OCI-LY7 (cell line): ENCODE measurements at regions of chr1 and their contacts with region 1.

Region 1: GRCh38 chr1:180863158-180863775 is 49.4 kb upstream of the KIAA1614 start:
- DNase-seq: peak; percentile 42
- H3K4me3 ChIP-seq: no peak overlapping the region
- H3K27ac ChIP-seq: no peak overlapping the region
- H3K4me1 ChIP-seq: no peaks in the 10 kb centered on the region
- CTCF ChIP-seq: peak; percentile 92

Region 2: DNA sequence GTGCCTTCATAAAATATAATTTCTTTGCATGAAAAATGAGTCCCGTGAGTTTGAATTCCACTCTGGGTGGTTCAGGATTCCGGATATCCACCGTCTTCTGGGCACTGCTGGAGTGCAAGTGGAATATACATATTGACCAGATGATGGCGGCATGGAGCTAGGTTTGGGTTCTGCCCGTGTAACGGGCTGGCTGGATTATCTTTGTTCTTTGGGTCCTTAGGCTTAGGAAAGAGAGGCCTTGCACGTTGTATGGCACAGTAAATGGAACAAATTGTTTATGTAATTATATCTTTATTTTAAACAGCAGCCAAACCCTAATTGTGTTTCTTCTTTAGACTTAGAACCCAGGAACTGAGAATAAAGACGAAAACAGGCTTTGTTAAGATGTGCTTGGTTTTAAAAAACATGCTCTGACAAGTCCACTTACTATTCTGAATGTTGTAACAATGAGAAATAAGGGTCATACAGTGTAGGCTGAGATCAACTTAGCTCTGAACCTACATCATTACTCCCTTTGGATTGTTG is 347.3 kb before region 1 on chr1:
- CTCF ChIA-PET with region 1: no interaction called
- POLR2A ChIA-PET with region 1: interaction called, 4 read pairs
- intact Hi-C with region 1: loop called (anchors 5 kb)
- DNase-seq: peak; percentile 74
- H3K4me3 ChIP-seq: no peak overlapping the region
- H3K27ac ChIP-seq: no peak overlapping the region
- H3K4me1 ChIP-seq: no peaks in the 10 kb centered on the region
- CTCF ChIP-seq: peak; percentile 88

Region 3: DNA sequence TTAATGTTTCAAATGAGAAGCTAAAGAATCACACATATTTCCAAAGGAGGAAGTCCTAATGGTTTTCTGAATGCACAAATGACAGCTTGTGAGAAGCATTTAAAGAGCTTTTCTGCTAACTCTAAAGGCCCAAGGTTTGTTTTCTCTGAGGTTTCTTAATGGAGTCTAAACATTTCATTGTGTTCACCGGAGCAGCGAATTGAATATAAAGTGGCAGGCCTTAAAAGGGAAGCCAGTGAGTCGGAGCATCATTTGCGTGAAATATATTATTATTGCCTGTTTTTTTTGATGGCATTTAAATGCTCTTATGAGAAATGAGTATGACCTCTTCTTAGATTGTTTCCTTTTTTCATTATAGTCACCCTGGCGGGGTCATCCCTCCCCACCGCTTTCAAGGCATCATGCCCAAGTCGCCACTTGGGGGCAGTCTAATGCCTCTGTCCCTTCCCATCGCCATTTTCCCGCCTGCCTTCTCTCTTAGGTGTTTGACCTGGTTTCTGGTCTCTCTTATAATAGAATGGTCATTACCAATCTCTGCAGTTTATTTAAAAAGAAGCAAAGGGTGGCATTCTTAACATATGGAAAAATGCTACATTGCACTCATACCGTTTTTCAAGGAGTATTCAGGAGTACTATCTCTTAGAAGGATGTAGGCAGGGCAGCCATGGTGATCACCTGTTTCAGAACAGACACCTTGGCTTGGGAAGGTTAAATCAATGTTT is 329.8 kb before region 1 on chr1:
- CTCF ChIA-PET with region 1: no interaction called
- POLR2A ChIA-PET with region 1: interaction called, 9 read pairs
- intact Hi-C with region 1: loop called (anchors 1 kb)
- DNase-seq: peak; percentile 70
- H3K4me3 ChIP-seq: no peak overlapping the region
- H3K27ac ChIP-seq: no peak overlapping the region
- H3K4me1 ChIP-seq: no peaks in the 10 kb centered on the region
- CTCF ChIP-seq: peak; percentile 98

Region 4: DNA sequence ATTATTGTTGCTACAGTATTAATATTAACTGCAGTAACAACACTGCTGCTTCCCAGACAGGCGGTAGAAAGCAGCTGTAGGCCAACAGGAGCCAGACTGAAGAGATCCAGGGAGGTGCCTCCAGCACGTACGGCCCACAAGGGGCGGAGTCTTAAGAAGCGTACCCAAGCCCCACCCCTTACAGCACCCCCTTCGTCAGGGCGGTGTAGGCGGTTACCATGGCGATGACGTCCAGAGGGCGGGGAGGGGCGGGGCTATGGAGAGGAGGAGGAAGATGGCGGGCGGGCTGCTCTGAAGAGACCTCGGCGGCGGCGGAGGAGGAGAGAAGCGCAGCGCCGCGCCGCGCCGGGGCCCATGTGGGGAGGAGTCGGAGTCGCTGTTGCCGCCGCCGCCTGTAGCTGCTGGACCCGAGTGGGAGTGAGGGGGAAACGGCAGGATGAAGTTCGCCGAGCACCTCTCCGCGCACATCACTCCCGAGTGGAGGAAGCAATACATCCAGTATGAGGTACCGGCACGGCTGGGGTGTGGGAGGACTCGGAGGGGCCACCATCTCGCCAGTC is 231.4 kb before region 1 on chr1 and contains the start of gene XPR1:
- CTCF ChIA-PET with region 1: no interaction called
- POLR2A ChIA-PET with region 1: interaction called, 3 read pairs
- intact Hi-C with region 1: loop called (anchors 5 kb)
- DNase-seq: peak; percentile 99
- H3K4me3 ChIP-seq: peak within 1 kb of the TSS; percentile 82
- H3K27ac ChIP-seq: peak within 1 kb of the TSS; percentile 76
- H3K4me1 ChIP-seq: peaks cover 25% of the 10 kb centered on the region
- CTCF ChIP-seq: peak; percentile 43; the same call in 1 of the 2 replicates
- total RNA-seq, gene XPR1: 8.6 and 9.0 TPM in 2 replicates

Region 5: GRCh38 chr1:180778782-180779398 is 84.4 kb before region 1 on chr1:
- CTCF ChIA-PET with region 1: no interaction called
- POLR2A ChIA-PET with region 1: no interaction called
- intact Hi-C with region 1: loop called (anchors 5 kb)
- DNase-seq: peak; percentile 25
- H3K4me3 ChIP-seq: no peak overlapping the region
- H3K27ac ChIP-seq: no peak overlapping the region
- H3K4me1 ChIP-seq: no peaks in the 10 kb centered on the region
- CTCF ChIP-seq: peak; percentile 79

Region 6: GRCh38 chr1:180805316-180805715 is 58.0 kb before region 1 on chr1:
- CTCF ChIA-PET with region 1: no interaction called
- POLR2A ChIA-PET with region 1: no interaction called
- intact Hi-C with region 1: no loop called
- DNase-seq: no peak
- H3K4me3 ChIP-seq: no peak overlapping the region
- H3K27ac ChIP-seq: no peak overlapping the region
- H3K4me1 ChIP-seq: no peaks in the 10 kb centered on the region
- CTCF ChIP-seq: no peak

Region 7: DNA sequence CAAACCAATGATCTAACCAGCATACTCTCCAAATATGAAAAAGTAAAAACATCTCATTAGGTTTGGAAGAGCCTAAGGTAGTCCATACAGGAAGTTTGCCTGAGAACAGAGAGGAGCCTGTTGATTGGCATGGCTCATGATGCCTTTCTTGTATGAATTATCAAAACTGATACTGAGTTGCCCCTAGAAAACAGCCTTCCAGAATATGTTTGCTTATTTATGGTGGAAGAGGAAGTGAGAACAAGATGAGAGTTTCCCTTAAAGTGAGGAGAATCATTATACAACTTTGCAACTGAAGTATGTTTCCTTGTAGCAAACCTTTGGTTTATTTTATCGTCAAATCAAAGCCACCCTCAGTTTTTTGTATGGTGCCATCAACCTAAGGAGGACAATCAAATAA is 25.6 kb after region 1 on chr1:
- CTCF ChIA-PET with region 1: no interaction called
- POLR2A ChIA-PET with region 1: no interaction called
- intact Hi-C with region 1: no loop called
- DNase-seq: peak; percentile 24
- H3K4me3 ChIP-seq: no peak overlapping the region
- H3K27ac ChIP-seq: no peak overlapping the region
- H3K4me1 ChIP-seq: peaks cover 9% of the 10 kb centered on the region
- CTCF ChIP-seq: no peak